Ascending aorta (tissue), 2 donors: ENCODE measurements at regions of chr11 and their contacts with region 1.

Region 1: DNA sequence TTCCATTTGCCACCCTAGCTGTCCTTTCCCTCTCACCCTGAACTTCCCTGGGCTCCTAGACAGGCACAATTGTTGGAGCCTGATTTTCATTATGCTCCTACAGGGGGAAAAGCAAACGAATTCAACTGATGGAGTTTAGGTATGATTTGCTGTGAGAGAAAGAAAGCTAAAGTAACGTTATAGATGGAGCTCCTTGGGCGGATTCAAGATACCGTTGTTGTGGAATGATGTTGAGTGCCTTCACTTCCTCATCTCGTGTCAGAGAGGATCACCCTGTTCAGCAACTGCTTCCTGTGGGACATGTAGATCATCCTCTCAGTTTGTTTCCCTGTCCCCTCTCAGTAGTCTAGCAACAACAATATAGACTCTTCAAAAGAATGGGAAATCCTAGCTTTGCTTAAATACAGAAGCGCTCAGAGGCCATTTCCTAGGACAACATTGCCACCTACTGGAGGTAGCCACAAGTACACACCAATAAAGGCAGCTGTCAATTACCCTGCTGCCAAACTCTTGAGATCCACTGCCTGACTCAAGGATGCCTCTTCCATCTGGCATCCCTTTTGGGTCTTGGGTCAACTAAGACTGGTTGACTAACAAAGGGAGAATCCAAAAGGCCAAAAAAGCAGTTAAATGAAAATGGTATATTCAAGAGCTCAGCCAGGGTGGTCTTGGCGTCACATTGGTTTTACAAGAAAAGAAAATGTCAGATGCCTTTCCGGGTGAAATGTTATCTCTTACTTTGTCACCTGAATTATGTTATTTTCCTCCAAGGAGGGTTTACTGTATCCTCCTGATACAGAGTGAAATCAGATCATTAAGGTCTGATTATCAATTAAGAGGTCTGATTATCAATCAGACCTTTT is 13.5 kb upstream of the DTX4 start:
- DNase-seq: no peak
- H3K4me3 ChIP-seq: peak overlapping the region in 1 of 2 donors; percentile 19
- H3K27ac ChIP-seq: no peak overlapping the region
- H3K4me1 ChIP-seq: no peaks in the 10 kb centered on the region
- H3K27me3 ChIP-seq: no peaks in the 10 kb centered on the region
- CTCF ChIP-seq: peak; percentile 70 to 83 (median 72)

Region 2: DNA sequence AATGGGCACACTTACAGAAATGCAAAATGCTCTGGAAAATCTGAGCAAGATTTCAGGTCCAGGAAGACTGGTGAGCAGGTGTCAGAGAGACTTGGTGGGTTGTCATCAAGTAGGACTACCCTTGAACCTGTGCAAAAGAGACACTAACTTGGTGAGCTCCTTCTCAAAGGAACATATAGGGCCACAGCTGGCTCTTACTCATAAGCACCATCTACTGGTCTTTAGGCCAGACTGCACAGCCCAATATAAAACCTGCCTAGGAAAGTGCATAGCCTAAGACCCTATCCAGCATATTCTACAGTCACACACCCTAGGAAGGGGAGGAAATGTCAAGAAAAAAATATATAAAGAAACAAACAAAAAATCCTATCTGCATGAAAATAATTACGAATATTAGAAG is 872.2 kb before region 1 on chr11:
- intact Hi-C with region 1: no loop called
- DNase-seq: no peak
- H3K4me3 ChIP-seq: no peak overlapping the region
- H3K27ac ChIP-seq: no peak overlapping the region
- H3K4me1 ChIP-seq: no peaks in the 10 kb centered on the region
- H3K27me3 ChIP-seq: no peaks in the 10 kb centered on the region
- CTCF ChIP-seq: peak in 1 of 3 experiments; percentile 23

Region 3: DNA sequence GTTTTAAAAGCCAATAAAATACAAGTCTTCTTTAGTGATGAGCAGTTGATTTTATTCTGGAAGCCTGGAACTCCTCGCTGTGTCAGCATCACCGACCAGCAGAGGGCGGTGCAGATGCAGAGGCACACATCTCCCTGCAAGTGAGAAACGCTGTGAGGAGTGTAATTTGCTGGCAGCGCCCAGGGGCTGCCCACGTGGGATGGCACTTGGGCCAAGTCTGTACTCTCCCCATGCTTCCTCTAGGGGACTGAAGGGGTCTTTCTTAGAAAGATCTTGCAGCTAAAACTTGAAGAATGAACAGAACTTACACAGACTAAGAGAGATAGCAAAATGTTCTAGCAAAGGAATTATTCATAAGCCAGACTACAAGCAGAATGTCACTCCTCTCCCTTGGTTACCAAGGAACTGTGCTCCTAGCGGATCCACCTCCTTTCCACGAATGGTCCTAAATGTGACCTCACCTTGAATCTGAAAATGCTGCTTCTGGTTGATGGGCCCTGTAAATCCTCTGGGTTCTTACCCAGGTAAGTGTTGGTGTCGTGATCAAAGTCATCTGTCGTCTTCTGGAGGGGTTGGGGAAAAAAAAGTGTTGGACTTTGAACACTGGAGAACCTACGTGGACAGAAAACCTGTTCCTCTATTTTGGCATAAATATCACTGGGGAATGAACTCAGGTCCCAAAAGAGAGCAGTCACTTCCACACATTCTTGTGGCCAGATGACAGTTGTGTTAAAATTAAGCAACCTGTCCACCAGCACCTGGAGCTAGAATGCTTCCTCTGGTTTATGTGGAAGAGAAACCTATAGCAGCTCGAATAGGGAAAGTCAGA is 504.1 kb before region 1 on chr11:
- intact Hi-C with region 1: loop called (anchors 5 kb)
- DNase-seq: peak; percentile 14 to 78
- H3K4me3 ChIP-seq: no peak overlapping the region
- H3K27ac ChIP-seq: no peak overlapping the region
- H3K4me1 ChIP-seq: no peaks in the 10 kb centered on the region
- H3K27me3 ChIP-seq: no peaks in the 10 kb centered on the region
- CTCF ChIP-seq: peak; percentile 44 to 81 (median 74)

Region 4: GRCh38 chr11:58845366-58845765 is 313.1 kb before region 1 on chr11:
- intact Hi-C with region 1: no loop called
- DNase-seq: no peak
- H3K4me3 ChIP-seq: no peak overlapping the region
- H3K27ac ChIP-seq: no peak overlapping the region
- H3K4me1 ChIP-seq: no peaks in the 10 kb centered on the region
- H3K27me3 ChIP-seq: no peaks in the 10 kb centered on the region
- CTCF ChIP-seq: no peak

Region 5: DNA sequence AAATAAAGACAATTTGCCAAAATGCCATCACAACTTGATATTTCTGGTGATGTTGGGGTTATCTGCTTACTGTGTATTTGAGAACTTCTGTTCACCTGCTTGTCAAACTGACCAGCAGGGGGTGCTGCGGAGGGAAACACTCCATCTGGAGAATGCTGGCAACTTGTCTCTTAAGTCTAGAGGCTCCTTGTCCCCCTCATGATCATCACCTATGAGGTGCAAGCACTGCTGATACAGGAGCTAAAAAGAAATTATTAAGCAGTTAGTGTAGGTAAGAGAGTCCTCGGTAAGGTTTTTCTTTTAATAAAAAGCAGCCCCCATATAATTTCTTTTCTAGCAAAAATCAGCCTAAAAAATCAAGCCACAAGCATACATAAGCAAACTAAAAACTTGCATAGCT is 105.0 kb before region 1 on chr11:
- intact Hi-C with region 1: loop called (anchors 5 kb)
- DNase-seq: peak in 1 of 2 donors; percentile 80
- H3K4me3 ChIP-seq: no peak overlapping the region
- H3K27ac ChIP-seq: no peak overlapping the region
- H3K4me1 ChIP-seq: no peaks in the 10 kb centered on the region
- H3K27me3 ChIP-seq: no peaks in the 10 kb centered on the region
- CTCF ChIP-seq: peak; percentile 18 to 64 (median 43)

Region 6: GRCh38 chr11:59097113-59097708 is 61.2 kb before region 1 on chr11:
- intact Hi-C with region 1: loop called (anchors 5 kb)
- DNase-seq: peak in 1 of 2 donors; percentile 74
- H3K4me3 ChIP-seq: no peak overlapping the region
- H3K27ac ChIP-seq: no peak overlapping the region
- H3K4me1 ChIP-seq: peaks cover 0 to under 1% of the 10 kb centered on the region in 2 donors
- H3K27me3 ChIP-seq: no peaks in the 10 kb centered on the region
- CTCF ChIP-seq: peak; percentile 33 to 58 (median 44)